ENCODE measurements at regions of chr13 and their contacts with region 1.

Region 1: DNA sequence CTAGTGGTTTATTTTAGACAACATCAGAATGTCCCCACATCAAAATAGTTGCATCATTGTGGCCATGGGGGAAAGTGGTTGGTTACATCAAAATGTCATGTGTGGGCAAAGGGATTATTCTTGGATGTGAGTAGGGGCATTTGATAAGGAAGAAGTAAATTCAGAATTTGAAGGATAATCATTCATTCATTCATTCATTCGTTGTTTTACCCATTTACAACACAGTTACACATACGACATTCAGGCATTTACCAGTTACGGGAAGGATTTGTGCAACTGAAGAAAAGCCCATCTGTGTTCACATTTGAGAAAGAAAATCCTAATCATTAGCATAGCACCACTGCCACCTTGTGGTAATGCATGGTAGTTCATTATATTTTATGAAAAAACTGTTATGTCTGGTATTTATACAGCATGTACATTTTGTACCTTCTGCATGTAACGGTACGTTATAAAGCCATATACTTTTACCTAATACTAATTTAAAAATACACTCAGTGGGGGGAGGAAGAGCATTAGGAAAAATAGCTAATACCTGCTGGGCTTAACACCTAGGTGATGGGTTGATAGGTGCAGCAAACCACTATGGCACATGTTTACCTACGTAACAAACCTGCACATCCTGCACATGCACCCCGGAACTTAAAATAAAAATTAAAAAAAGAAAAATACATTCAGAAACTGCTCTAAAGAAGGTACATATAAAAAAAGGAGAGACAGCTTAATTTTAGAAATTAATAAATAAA is 62.1 kb downstream of the DGKH start:
- DNase-seq: peak; percentile 73
- H3K4me3 ChIP-seq: no peak overlapping the region
- H3K27ac ChIP-seq: no peak overlapping the region
- H3K4me1 ChIP-seq: peaks cover 31% of the 10 kb centered on the region
- H3K27me3 ChIP-seq: no peaks in the 10 kb centered on the region
- CTCF ChIP-seq: peak; percentile 56 to 67

Region 2: DNA sequence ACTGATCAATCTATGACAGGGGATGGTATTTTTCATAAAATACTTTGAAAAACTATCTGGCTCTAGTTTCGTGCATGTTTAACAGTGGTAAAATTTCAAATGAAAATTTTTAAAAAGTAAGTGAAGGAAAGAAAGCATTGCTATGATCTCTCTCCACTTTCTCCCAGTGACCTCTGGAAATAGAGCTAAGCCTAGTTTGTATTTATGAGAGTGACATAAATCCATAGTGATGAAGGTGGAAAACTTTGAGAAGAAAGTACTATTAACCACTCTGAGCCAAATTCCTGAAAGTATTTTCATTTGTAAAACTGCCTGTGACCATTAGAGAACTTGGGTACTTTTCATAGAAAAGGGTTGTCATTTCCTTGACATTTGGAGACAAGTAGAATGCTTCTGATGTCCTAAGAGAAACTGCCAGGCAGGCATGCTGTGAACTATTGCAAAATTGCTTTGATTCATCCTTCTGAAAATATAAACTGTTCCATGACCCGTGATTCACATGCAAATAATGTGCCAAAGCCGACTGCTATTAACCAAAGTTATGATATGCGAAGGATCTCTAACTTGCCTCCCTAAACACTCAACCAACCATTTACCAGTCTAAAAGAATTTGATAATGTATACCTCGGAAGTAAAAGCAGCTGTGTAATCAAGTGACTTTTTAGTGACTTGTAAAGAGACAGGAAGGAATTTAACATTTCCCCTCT is 282.9 kb before region 1 on chr13:
- CTCF ChIA-PET with region 1: no interaction called
- dilution Hi-C with region 1: no loop called
- in situ Hi-C with region 1: no loop called
- intact Hi-C with region 1: loop called (anchors 5 kb)
- DNase-seq: peak; percentile 81
- H3K4me3 ChIP-seq: no peak overlapping the region
- H3K27ac ChIP-seq: peak overlapping the region; percentile 51
- H3K4me1 ChIP-seq: peaks cover 17% of the 10 kb centered on the region
- H3K27me3 ChIP-seq: no peaks in the 10 kb centered on the region
- CTCF ChIP-seq: no peak

Region 3: DNA sequence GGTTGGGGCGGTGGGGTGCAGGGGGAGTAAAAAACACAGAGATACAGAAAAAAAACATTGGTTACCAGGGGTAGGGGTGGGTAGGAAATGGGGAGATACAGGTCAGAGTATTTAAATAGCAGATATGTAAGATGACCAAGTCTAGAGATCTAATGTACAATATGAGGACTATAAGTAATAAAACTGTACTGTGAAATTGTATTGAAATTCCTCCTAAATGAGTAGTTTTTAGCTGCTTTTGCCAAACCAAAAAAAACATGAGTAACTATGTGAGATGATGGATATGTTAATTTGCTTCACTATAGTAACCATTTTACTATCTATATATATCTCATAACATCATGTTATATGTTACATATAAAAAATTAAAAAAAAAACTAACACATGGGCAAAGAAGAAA is 179.2 kb before region 1 on chr13:
- CTCF ChIA-PET with region 1: interaction called, 16 read pairs
- dilution Hi-C with region 1: no loop called
- in situ Hi-C with region 1: no loop called
- intact Hi-C with region 1: no loop called
- DNase-seq: no peak
- H3K4me3 ChIP-seq: no peak overlapping the region
- H3K27ac ChIP-seq: no peak overlapping the region
- H3K4me1 ChIP-seq: peaks cover 4% of the 10 kb centered on the region
- H3K27me3 ChIP-seq: no peaks in the 10 kb centered on the region
- CTCF ChIP-seq: no peak

Region 4: DNA sequence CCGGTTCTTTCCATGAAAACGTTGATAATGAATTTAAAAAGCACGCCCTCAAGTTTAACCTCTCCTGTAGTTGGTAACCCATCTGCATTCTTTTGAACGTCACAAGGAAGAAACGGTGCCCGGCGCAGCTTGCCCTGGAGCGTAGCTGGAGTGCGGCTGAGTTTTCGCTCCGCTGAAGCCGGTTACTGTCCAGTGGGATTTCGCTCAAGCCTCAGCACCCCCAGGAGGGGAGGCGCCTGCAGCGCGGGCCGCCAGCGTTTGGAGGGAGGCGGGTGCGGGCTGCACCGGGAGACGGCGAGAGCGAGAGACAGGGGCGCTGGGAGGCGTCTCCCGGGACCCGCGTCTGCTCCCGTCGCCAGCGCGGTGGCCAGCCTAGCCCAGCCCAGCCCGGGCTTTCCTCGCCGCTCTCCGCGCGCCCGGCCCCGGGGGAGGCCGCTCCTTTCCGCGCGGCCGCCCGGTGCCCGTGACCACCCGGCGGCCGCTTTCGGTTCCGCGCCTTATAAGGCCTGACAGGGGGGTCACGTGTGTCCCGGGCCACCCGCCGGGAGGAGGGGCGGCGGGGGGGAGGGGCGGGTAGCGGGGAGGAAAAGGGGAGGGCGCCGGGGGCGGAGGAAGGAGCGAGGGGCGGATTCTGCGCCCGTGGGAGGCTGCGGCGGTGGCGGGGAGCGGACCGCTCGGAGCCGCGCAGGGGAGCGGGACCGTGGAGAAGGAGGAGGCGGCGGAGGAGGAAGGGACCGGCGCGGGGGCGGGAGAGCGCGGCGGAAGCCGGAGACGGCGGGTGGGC is 70.4 kb before region 1 on chr13:
- CTCF ChIA-PET with region 1: no interaction called
- dilution Hi-C with region 1: no loop called
- in situ Hi-C with region 1: no loop called
- intact Hi-C with region 1: loop called (anchors 1 kb)
- DNase-seq: peak; percentile 81
- H3K4me3 ChIP-seq: peak overlapping the region; percentile 45 to 92 (median 67)
- H3K27ac ChIP-seq: peak overlapping the region; percentile 63
- H3K4me1 ChIP-seq: peaks cover 14% of the 10 kb centered on the region
- H3K27me3 ChIP-seq: no peaks in the 10 kb centered on the region
- CTCF ChIP-seq: peak in 1 of 2 donors; percentile 16

Region 5: DNA sequence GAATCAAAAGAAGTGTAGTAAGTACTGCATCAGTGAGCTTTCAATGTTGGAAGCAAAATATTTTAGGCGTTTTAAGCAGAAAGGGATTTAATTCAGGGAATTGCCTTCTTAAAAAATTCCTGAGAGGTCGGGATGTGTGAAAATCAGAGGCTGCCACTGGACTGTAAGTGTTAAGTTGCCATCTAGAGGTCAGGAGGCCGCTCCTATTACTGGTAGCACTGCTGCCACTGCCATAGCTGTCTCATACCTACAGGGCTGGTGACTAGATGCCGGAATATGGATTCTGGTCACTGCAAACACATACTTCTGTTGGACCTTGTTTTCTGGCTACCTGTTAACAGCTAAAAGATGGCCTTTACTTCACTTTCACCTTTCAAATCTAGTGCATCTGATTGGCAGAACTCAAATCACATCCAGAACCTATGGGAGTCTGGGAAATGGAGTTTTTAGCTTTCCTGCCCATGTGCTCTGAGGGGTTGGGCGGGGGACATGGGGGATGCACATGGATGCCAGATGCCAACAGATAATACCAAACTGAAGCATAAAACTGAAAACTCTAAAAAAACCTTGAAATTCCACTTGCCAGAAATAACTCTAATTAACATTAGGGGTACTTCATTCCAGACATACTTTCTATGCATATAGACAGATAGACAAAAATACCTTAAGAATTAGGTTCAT is 32.3 kb before region 1 on chr13:
- CTCF ChIA-PET with region 1: no interaction called
- dilution Hi-C with region 1: no loop called
- in situ Hi-C with region 1: no loop called
- intact Hi-C with region 1: no loop called
- DNase-seq: no peak
- H3K4me3 ChIP-seq: no peak overlapping the region
- H3K27ac ChIP-seq: no peak overlapping the region
- H3K4me1 ChIP-seq: no peaks in the 10 kb centered on the region
- H3K27me3 ChIP-seq: no peaks in the 10 kb centered on the region
- CTCF ChIP-seq: no peak